GM12878 (cell line): ENCODE measurements at regions of chr1 and their contacts with region 1.

Region 1: GRCh38 chr1:30718636-30719405 is 4.6 kb downstream of the MATN1 start:
- DNase-seq: peak; percentile 71
- ATAC-seq: peak; percentile 84
- H3K4me3 ChIP-seq: peak overlapping the region; percentile 90
- H3K27ac ChIP-seq: peak overlapping the region; percentile 93
- H3K4me1 ChIP-seq: peaks cover 18% of the 10 kb centered on the region
- H3K27me3 ChIP-seq: no peaks in the 10 kb centered on the region
- CTCF ChIP-seq: peak; percentile 86 to 95 (median 87); a peak in 5 of 6 replicates
- EP300 ChIP-seq: peak in 1 of 2 experiments; percentile 22; a peak in 1 of 4 replicates
- POLR2A ChIP-seq: peak; percentile 87
- RAD21 ChIP-seq: no peak

Region 2: GRCh38 chr1:30743584-30744059 is 24.8 kb after region 1 on chr1:
- CTCF ChIA-PET with region 1: interaction called, 76 read pairs
- POLR2A ChIA-PET with region 1: interaction called, 48 read pairs
- RAD21 ChIA-PET with region 1: interaction called, 211 read pairs
- SMC1A ChIA-PET with region 1: interaction called, 556 read pairs
- in situ Hi-C with region 1: no loop called
- intact Hi-C with region 1: no loop called
- DNase-seq: peak; percentile 82
- ATAC-seq: peak; percentile 44
- H3K4me3 ChIP-seq: peak overlapping the region; percentile 98
- H3K27ac ChIP-seq: peak overlapping the region; percentile 93
- H3K4me1 ChIP-seq: peaks cover 91% of the 10 kb centered on the region
- H3K27me3 ChIP-seq: no peaks in the 10 kb centered on the region
- CTCF ChIP-seq: no peak; a peak in 1 of 6 replicates
- EP300 ChIP-seq: peak in 1 of 2 experiments; percentile 71; a peak in 2 of 4 replicates
- POLR2A ChIP-seq: no peak; the same call in 1 of the 2 replicates
- RAD21 ChIP-seq: no peak

Region 3: GRCh38 chr1:30756545-30757195 is 37.8 kb after region 1 on chr1:
- CTCF ChIA-PET with region 1: interaction called, 76 read pairs
- POLR2A ChIA-PET with region 1: interaction called, 8 read pairs
- RAD21 ChIA-PET with region 1: interaction called, 211 read pairs
- SMC1A ChIA-PET with region 1: interaction called, 556 read pairs
- in situ Hi-C with region 1: no loop called
- intact Hi-C with region 1: no loop called
- DNase-seq: no peak
- ATAC-seq: peak; percentile 16
- H3K4me3 ChIP-seq: peak overlapping the region; percentile 98
- H3K27ac ChIP-seq: peak overlapping the region; percentile 93
- H3K4me1 ChIP-seq: peaks cover 48% of the 10 kb centered on the region
- H3K27me3 ChIP-seq: no peaks in the 10 kb centered on the region
- CTCF ChIP-seq: no peak
- EP300 ChIP-seq: peak in 1 of 2 experiments; percentile 59; a peak in 1 of 4 replicates
- POLR2A ChIP-seq: no peak; the same call in 1 of the 2 replicates
- RAD21 ChIP-seq: no peak

Region 4: GRCh38 chr1:30768830-30769718 is 50.3 kb after region 1 on chr1:
- CTCF ChIA-PET with region 1: interaction called, 22 read pairs
- POLR2A ChIA-PET with region 1: interaction called, 6 read pairs
- RAD21 ChIA-PET with region 1: interaction called, 18 read pairs
- SMC1A ChIA-PET with region 1: interaction called, 556 read pairs
- in situ Hi-C with region 1: loop called (anchors 10 kb)
- intact Hi-C with region 1: no loop called
- DNase-seq: no peak
- ATAC-seq: peak; percentile 12
- H3K4me3 ChIP-seq: no peak overlapping the region
- H3K27ac ChIP-seq: no peak overlapping the region; the same call in none of the 2 replicates
- H3K4me1 ChIP-seq: peaks cover 40% of the 10 kb centered on the region
- H3K27me3 ChIP-seq: no peaks in the 10 kb centered on the region
- CTCF ChIP-seq: no peak
- EP300 ChIP-seq: no peak
- POLR2A ChIP-seq: no peak
- RAD21 ChIP-seq: no peak

Region 5: GRCh38 chr1:30911046-30911954 is 192.5 kb after region 1 on chr1:
- CTCF ChIA-PET with region 1: interaction called, 64 read pairs
- POLR2A ChIA-PET with region 1: no interaction called
- RAD21 ChIA-PET with region 1: interaction called, 17 read pairs
- SMC1A ChIA-PET with region 1: interaction called, 15 read pairs
- in situ Hi-C with region 1: loop called (anchors 5 kb)
- intact Hi-C with region 1: loop called (anchors 1 kb)
- DNase-seq: no peak
- ATAC-seq: peak; percentile 84
- H3K4me3 ChIP-seq: no peak overlapping the region
- H3K27ac ChIP-seq: no peak overlapping the region
- H3K4me1 ChIP-seq: no peaks in the 10 kb centered on the region
- H3K27me3 ChIP-seq: peaks cover 16% of the 10 kb centered on the region in 2 experiments
- CTCF ChIP-seq: peak; percentile 71 to 82 (median 79)
- EP300 ChIP-seq: no peak
- POLR2A ChIP-seq: no peak
- RAD21 ChIP-seq: peak; percentile 88